ENCODE measurements at regions of chr4 and their contacts with region 1.

Region 1: DNA sequence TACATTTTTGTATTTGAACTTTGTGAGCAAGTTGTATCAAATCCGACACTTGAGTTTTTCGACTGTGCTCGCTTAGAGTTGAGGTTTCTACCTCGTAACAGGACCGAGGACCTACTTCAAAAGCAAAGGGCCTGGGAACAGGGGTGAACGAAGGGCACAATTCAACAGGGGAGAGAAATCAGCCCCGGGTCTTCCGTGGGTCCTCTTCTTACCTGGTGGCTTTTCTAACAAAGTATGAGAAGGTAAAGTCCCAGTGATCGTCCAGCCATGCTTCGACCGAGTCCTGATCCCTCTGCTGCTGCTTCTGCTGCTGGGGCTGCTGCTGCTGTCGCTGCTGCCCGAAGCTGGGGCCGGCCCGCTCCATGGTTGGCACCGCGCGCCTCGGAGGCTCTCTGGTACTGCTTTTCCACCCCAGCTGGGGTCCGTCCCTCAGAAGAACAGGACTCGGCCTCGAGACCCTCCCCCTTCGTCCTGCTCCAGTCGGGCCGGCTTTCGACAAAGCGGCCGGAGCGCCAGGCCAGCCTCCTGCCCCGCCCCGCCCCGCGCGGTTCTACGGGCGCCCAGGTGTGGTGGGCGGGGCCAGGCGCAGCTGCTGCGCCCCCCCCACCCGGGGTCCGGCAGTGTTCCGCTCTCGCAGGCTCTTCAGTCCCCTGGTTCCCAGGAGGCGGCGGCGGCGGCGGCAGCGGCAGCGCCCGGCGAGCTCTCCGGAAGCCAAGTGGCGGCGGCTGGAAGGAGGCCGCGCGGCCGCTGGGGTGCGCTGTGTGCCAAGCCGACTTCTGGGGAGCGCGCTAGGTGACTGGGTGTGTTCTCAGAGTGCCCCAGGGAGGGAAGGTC is at the start of gene PDE5A:
- DNase-seq: peak; percentile 67 to 81
- H3K4me3 ChIP-seq: peak within 1 kb of the TSS; percentile 68
- H3K27ac ChIP-seq: peak within 1 kb of the TSS; percentile 37; the same call in 1 of the 2 replicates
- H3K4me1 ChIP-seq: peaks cover 24% of the 10 kb centered on the region
- H3K27me3 ChIP-seq: no peaks in the 10 kb centered on the region
- CTCF ChIP-seq: peak; percentile 67
- total RNA-seq, gene PDE5A: 7.9 and 8.5 TPM in 2 replicates

Region 2: DNA sequence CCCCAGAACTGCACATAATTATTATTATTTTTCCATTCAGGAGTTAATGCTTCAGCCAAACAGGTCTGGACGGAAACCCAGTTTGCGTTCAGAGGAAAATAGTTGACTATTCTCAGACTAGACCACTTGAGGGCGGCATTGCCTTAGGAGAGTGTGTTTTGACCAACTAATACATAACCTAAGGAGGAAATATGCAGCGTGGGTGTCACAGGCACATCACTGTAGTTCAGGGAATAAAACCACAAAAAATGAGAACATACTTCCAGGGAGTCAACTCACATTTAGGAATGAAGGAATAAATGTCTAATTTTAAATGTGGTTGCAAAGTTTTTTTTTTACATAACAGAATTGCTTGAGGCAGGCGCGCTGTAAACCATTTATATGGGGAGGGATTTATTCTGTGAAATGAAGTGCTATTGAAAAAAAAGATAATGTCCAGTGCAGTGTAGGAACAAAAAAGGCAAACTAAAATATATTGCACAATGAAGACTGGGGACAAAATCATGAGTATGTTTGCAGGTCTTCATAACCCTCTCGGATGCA is 646.6 kb before region 1 on chr4:
- CTCF ChIA-PET with region 1: no interaction called
- POLR2A ChIA-PET with region 1: interaction called, 3 read pairs
- intact Hi-C with region 1: loop called (anchors 2 kb)
- DNase-seq: peak; percentile 29 to 45
- H3K4me3 ChIP-seq: no peak overlapping the region
- H3K27ac ChIP-seq: no peak overlapping the region
- H3K4me1 ChIP-seq: no peaks in the 10 kb centered on the region
- H3K27me3 ChIP-seq: no peaks in the 10 kb centered on the region
- CTCF ChIP-seq: peak; percentile 81

Region 3: GRCh38 chr4:119559044-119559647 is 69.4 kb before region 1 on chr4:
- CTCF ChIA-PET with region 1: interaction called, 4 read pairs
- POLR2A ChIA-PET with region 1: no interaction called
- intact Hi-C with region 1: loop called (anchors 5 kb)
- DNase-seq: no peak
- H3K4me3 ChIP-seq: no peak overlapping the region
- H3K27ac ChIP-seq: no peak overlapping the region
- H3K4me1 ChIP-seq: no peaks in the 10 kb centered on the region
- H3K27me3 ChIP-seq: no peaks in the 10 kb centered on the region
- CTCF ChIP-seq: peak; percentile 73

Region 4: DNA sequence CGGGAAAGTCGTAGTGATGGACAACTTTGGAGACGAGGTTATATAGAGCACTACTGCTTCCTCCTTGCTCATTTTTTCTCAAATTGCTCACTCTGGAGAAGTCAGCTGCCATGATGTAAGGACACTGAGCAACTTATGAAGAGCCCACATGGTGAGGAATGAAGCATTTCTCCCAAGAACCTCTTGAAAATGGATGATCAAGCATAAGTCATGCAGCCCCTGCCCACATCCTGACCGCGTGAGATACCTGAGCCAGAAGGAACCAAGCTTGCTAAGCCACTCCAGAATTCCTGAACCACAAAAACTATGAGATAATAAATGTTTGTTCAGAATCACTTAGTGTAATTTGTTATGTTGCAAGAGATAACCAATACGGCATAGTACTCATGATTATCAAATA is 42.8 kb before region 1 on chr4:
- CTCF ChIA-PET with region 1: no interaction called
- POLR2A ChIA-PET with region 1: no interaction called
- intact Hi-C with region 1: no loop called
- DNase-seq: no peak
- H3K4me3 ChIP-seq: no peak overlapping the region
- H3K27ac ChIP-seq: no peak overlapping the region
- H3K4me1 ChIP-seq: no peaks in the 10 kb centered on the region
- H3K27me3 ChIP-seq: no peaks in the 10 kb centered on the region
- CTCF ChIP-seq: no peak

Region 5: GRCh38 chr4:119729835-119730670 is 101.5 kb after region 1 on chr4:
- CTCF ChIA-PET with region 1: interaction called, 3 read pairs
- POLR2A ChIA-PET with region 1: no interaction called
- intact Hi-C with region 1: loop called (anchors 2 kb)
- DNase-seq: peak; percentile 70 to 91
- H3K4me3 ChIP-seq: peak overlapping the region; percentile 41; the same call in 1 of the 2 replicates
- H3K27ac ChIP-seq: peak overlapping the region; percentile 99
- H3K4me1 ChIP-seq: peaks cover 49% of the 10 kb centered on the region
- H3K27me3 ChIP-seq: no peaks in the 10 kb centered on the region
- CTCF ChIP-seq: no peak

Region 6: DNA sequence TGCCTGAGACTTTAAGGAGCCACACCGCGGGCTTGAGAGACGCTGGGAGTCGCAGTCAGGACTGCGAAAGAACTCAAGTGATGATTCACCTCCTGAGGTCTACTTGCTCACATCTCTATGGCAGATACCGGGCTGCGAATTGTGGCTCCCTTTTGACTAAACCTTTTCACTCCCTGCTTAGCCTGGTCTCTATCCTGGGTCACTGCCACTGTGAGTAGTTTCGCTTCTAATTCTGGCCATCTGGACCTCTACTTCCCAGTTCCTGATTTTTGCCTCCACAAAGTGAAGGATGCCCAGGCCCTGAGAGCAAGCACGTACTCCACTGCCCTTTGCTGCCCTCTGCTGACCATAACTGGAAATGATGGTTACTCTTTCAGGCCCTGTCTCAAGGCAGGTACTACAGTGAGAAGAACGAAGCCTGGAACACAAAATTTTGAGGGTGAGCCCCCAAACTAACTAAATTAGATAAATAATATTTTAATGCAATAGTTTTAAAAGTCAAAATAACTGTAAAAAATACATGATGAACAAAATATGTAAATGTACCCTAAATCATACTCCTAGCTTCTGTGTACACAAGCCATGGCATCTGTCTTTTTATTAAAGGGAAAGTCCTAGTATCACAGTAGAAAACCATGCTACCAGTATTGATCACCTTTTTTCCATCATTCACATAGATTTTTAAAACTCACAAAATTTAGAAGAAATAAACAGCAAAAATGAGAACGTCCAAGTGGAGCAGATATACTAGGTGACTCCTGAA is 421.4 kb after region 1 on chr4:
- CTCF ChIA-PET with region 1: no interaction called
- POLR2A ChIA-PET with region 1: no interaction called
- intact Hi-C with region 1: loop called (anchors 1 kb)
- DNase-seq: peak in 1 of 2 experiments; percentile 62
- H3K4me3 ChIP-seq: no peak overlapping the region
- H3K27ac ChIP-seq: no peak overlapping the region
- H3K4me1 ChIP-seq: no peaks in the 10 kb centered on the region
- H3K27me3 ChIP-seq: no peaks in the 10 kb centered on the region
- CTCF ChIP-seq: peak; percentile 84